CD8-positive, alpha-beta T cell (primary cell): ENCODE measurements at regions of chr7 and their contacts with region 1.

Region 1: GRCh38 chr7:119888251-119888650 is 384.7 kb upstream of the KCND2 start:
- DNase-seq: no peak
- ATAC-seq: no peak
- H3K4me3 ChIP-seq: no peak overlapping the region
- H3K4me3 Mint-ChIP-seq: no peak overlapping the region
- H3K27ac ChIP-seq: no peak overlapping the region
- H3K27ac Mint-ChIP-seq: no peak overlapping the region
- H3K4me1 ChIP-seq: no peaks in the 10 kb centered on the region
- H3K4me1 Mint-ChIP-seq: no peaks in the 10 kb centered on the region
- H3K27me3 ChIP-seq: no peaks in the 10 kb centered on the region
- H3K27me3 Mint-ChIP-seq: no peaks in the 10 kb centered on the region
- CTCF ChIP-seq: no peak

Region 2: GRCh38 chr7:118918556-118918955 is 969.7 kb before region 1 on chr7:
- CTCF ChIA-PET with region 1: no interaction called
- POLR2A ChIA-PET with region 1: no interaction called
- intact Hi-C with region 1: loop called in 1 of 2 experiments (anchors 5 kb)
- DNase-seq: no peak
- ATAC-seq: no peak
- H3K4me3 ChIP-seq: no peak overlapping the region
- H3K4me3 Mint-ChIP-seq: no peak overlapping the region
- H3K27ac ChIP-seq: no peak overlapping the region
- H3K27ac Mint-ChIP-seq: no peak overlapping the region
- H3K4me1 ChIP-seq: no peaks in the 10 kb centered on the region
- H3K4me1 Mint-ChIP-seq: no peaks in the 10 kb centered on the region
- H3K27me3 ChIP-seq: no peaks in the 10 kb centered on the region
- H3K27me3 Mint-ChIP-seq: no peaks in the 10 kb centered on the region
- CTCF ChIP-seq: no peak